ENCODE measurements at regions of chr1 and their contacts with region 1.

Region 1: DNA sequence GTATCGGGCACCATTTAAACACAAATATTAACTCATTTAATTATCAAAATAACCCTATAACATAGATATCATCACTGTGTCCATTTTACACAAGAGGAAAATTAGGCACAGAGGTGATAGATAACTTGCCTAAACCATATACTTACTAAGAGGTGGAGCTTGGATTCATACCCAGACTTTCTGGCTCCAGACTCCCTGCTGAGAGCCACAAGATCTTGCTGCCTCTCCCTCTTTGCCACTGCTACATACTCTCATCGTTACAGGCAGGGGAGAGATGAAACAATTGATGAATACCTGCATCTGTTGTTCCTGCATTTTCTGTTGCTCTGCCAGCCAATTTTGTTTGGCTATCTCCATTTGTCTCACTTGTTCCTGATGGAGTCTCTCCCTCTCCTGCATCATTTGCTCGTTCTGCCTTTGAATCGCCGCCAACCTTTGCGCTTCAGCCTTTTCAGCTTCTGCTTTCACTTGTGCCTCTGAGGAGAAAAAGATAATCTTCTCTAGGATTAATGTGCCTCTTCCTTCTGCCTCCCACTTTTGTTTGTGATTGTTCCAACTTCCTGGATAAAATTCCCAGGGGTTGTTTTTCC is 10.6 kb downstream of the GBP5 start:
- DNase-seq: peak; percentile 61
- H3K4me3 ChIP-seq: no peak overlapping the region
- H3K27ac ChIP-seq: no peak overlapping the region
- H3K4me1 ChIP-seq: peaks cover 19% of the 10 kb centered on the region
- H3K27me3 ChIP-seq: no peaks in the 10 kb centered on the region
- CTCF ChIP-seq: no peak

Region 2: GRCh38 chr1:88773540-88774150 is 488.4 kb before region 1 on chr1:
- CTCF ChIA-PET with region 1: no interaction called
- POLR2A ChIA-PET with region 1: no interaction called
- intact Hi-C with region 1: no loop called
- DNase-seq: peak; percentile 48
- H3K4me3 ChIP-seq: no peak overlapping the region
- H3K27ac ChIP-seq: no peak overlapping the region
- H3K4me1 ChIP-seq: no peaks in the 10 kb centered on the region
- H3K27me3 ChIP-seq: no peaks in the 10 kb centered on the region
- CTCF ChIP-seq: no peak

Region 3: DNA sequence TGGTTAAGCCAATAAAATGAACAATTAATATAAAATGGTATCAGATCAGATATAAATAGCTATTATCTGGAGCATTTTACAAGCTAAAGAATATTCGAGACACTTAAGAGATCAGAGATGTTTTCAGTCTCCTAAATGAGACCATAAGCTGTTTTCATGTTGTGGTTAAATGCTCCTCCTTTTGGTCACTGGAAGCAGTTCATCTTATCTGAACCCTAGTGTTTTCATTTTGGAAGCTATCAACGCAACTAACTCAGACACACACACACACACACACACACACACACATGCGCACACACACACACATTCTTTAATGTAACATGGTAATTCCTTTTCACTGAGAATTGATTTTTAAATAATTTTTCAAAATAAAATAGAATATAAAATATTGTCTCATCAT is 360.9 kb after region 1 on chr1:
- CTCF ChIA-PET with region 1: interaction called, 11 read pairs
- POLR2A ChIA-PET with region 1: no interaction called
- intact Hi-C with region 1: no loop called
- DNase-seq: no peak
- H3K4me3 ChIP-seq: no peak overlapping the region
- H3K27ac ChIP-seq: no peak overlapping the region
- H3K4me1 ChIP-seq: no peaks in the 10 kb centered on the region
- H3K27me3 ChIP-seq: no peaks in the 10 kb centered on the region
- CTCF ChIP-seq: no peak

Measured in A673 (cell line).